PC-9 (cell line): ENCODE measurements at regions of chr12 and their contacts with region 1.

Region 1: GRCh38 chr12:95649375-95649791 is 98.1 kb upstream of the USP44 start:
- DNase-seq: peak; percentile 86 to 98
- H3K4me3 ChIP-seq: peak overlapping the region; percentile 27; the same call in 1 of the 2 replicates
- H3K27ac ChIP-seq: peak overlapping the region; percentile 98
- H3K4me1 ChIP-seq: peaks cover 72% of the 10 kb centered on the region
- H3K27me3 ChIP-seq: no peaks in the 10 kb centered on the region
- CTCF ChIP-seq: no peak

Region 2: DNA sequence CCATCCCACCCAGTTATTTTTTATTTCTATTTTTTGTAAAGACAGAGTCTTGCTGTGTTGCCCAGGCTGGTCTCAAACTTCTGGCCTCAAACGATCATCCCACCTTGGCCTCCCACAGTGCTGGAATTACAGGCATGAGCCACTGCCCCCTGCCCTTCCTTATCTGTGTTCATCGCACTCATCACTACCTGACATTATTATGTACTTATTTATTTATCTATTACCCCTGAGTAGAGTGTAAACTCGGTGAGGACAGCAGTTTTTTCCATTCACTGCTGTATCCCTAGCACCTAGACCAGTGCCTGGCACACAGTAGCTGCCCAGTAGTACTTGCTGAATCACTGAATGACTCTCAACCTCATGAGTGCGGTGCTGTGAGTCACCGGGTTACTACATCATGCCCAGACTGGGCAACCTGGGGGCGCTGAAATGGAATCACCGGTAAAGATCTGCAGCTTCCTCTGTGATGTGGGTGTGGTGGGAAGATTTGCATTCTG is 16.3 kb before region 1 on chr12:
- CTCF ChIA-PET with region 1: no interaction called
- POLR2A ChIA-PET with region 1: interaction called, 3 read pairs
- intact Hi-C with region 1: loop called (anchors 1 kb)
- DNase-seq: peak; percentile 76 to 96
- H3K4me3 ChIP-seq: no peak overlapping the region
- H3K27ac ChIP-seq: peak overlapping the region; percentile 99
- H3K4me1 ChIP-seq: peaks cover 38% of the 10 kb centered on the region
- H3K27me3 ChIP-seq: no peaks in the 10 kb centered on the region
- CTCF ChIP-seq: no peak

Region 3: DNA sequence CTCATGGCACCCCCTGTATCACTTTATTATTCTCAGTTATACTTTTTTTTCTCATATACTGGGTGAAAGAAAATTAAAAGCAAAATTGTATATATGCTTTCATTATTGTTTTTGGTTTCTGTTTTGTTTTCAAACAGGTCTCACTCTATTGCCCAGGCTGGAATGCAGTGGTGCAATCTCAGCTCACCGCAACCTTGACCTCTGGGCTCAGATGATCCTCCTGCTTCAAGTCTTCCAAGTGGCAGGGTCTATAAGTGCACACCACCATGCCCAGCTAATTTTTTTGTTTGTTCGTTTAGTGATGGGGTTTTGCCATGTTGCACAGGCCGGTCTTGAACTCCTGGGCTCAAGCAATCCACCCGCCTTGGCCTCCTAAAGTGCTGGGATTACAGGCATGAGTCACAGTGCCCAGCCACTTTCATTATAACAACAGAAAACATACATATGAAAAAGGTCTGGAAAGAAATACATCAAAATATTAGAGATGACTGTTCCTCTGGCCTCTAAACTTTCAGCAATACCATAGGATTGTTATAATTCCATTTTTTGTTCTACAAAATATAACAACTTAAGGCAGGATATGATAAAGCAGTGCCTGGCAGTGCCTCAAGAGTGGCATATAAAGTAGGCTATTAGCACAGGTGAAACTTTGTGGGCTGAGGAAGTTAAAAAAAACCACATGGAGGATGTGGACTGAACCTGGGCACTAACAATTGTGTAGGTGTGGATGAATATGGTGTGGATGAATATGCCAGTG is 147.0 kb after region 1 on chr12:
- CTCF ChIA-PET with region 1: no interaction called
- POLR2A ChIA-PET with region 1: no interaction called
- intact Hi-C with region 1: loop called (anchors 2 kb)
- DNase-seq: peak; percentile 73 to 84
- H3K4me3 ChIP-seq: peak overlapping the region; percentile 17; the same call in 1 of the 2 replicates
- H3K27ac ChIP-seq: peak overlapping the region; percentile 96
- H3K4me1 ChIP-seq: peaks cover 82% of the 10 kb centered on the region
- H3K27me3 ChIP-seq: no peaks in the 10 kb centered on the region
- CTCF ChIP-seq: no peak